Naive thymus-derived CD8-positive, alpha-beta T cell (primary cell): ENCODE measurements at regions of chr5 and their contacts with region 1.

Region 1: DNA sequence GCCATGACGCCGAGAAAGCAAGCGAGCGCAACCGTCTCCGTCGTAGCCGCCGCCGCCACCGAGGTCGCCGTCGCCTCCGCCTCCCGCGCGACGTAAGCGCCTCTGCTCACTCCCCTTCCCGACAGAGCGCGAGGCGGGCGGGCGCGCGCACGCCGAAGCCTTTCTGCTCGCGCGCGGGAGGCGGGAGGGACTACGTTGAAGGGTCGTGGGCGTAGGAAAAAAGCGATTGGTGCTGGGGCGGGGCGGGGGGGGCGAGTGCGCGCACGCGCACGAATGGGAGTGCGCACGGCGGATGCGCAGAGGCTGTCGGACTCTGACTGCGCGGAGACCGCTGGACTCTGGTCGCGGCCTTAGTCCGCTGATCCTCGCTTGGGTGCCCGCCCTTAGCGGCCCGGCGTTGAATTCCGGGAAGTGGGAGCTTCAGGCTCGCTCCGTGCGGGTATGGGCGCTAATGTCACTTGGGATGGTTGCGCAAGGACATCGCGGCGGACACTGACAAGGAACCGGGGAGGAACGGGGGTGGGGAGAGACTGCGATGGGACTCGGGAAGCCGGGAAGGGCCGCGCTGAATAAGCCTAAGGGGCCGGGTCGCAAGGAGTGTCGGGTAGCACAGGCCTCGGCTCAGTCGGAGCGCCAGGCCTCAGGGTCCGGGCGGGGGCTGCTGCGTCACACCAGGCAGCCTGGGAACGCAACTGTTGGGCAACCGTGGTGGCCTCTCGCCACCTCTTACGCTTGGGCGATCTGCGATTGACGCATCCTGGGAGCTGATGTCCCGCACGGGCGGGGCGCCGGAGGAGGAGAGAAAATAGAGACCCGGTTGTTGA is at the start of gene CHD1:
- DNase-seq: peak; percentile 92 to 98 (median 96)
- ATAC-seq: peak; percentile 54 to 59
- H3K4me3 Mint-ChIP-seq: peak within 1 kb of the TSS; percentile 82 to 99 (median 97)
- H3K27ac Mint-ChIP-seq: peak within 1 kb of the TSS; percentile 98 to 100 (median 100)
- H3K4me1 Mint-ChIP-seq: peaks cover 17 to 81% (median 60%) of the 10 kb centered on the region in 4 donors
- H3K27me3 Mint-ChIP-seq: peaks cover 0 to 5% (median 0%) of the 10 kb centered on the region in 5 donors
- polyA plus RNA-seq, gene CHD1: 8.6 to 9.4 (median 9.0) TPM

Region 2: DNA sequence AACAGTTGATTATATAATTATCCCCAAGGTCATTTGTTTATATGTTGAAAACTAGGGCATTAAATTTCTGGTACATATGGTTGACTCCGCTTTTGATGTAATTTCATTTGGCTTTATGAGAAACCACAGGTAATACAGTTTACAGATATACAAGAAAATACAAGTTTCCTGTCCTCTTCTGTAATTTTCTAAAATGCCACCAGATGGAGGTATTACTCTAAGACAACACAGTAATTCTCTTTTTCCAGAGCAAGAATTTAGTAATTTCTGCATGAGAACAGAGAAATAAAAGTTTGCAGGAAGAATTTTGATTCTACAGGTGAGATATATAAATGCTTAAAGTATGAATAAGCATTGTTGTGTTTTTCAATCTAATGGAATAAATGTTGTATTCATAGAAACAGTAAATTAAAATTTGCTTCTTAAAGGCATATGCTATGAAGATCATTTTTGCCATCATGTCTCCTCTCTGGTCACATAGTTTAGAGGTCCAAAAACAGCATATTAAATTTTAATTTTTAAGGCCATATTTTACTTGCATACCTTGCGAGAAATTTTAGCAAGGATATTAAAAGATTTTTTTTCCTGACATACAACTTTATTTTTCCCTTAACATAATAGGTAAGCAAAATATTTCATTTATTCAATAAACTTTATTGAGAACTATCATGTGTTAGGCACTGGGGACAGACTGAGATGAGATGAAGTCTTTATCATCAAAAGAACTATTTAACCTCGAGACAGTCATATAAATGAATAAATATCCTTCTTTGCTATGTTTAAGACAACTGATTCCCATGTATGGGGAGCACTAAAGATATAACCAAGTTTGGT is 23.0 kb before region 1 on chr5:
- POLR2A ChIA-PET with region 1: interaction called, 11 read pairs
- DNase-seq: peak in 3 of 10 donors; percentile 71 to 73 (median 71)
- ATAC-seq: peak; percentile 61 to 65
- H3K4me3 Mint-ChIP-seq: no peak overlapping the region
- H3K27ac Mint-ChIP-seq: peak overlapping the region in 6 of 10 donors; percentile 12 to 73 (median 31)
- H3K4me1 Mint-ChIP-seq: peaks cover 15 to 57% (median 43%) of the 10 kb centered on the region in 4 donors
- H3K27me3 Mint-ChIP-seq: no peaks in the 10 kb centered on the region

Region 3: GRCh38 chr5:98940581-98940980 is 11.5 kb after region 1 on chr5:
- POLR2A ChIA-PET with region 1: interaction called, 36 read pairs
- DNase-seq: no peak
- ATAC-seq: no peak
- H3K4me3 Mint-ChIP-seq: no peak overlapping the region
- H3K27ac Mint-ChIP-seq: peak overlapping the region in 9 of 10 donors; percentile 5 to 85 (median 60)
- H3K4me1 Mint-ChIP-seq: peaks cover 24 to 58% (median 48%) of the 10 kb centered on the region in 4 donors
- H3K27me3 Mint-ChIP-seq: no peaks in the 10 kb centered on the region

Region 4: DNA sequence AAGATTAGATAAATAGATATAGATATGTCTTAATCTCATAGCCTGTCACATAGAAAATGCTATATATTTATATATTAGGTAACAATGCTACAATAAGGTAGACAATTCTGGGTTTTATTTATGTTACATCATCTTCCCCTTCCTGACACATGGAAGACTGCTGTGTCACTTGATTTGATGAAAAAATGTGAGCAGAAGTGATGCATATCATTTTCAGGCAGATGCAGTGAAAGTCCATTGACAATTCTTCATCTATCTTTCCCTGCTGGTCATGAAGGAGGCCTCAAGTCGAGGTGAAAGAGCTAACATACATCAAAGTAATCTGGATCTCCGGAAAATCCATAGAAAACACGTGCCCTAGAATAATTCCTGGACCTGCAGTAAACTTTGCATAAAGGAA is 57.5 kb after region 1 on chr5:
- POLR2A ChIA-PET with region 1: no interaction called
- DNase-seq: no peak
- ATAC-seq: no peak
- H3K4me3 Mint-ChIP-seq: no peak overlapping the region
- H3K27ac Mint-ChIP-seq: no peak overlapping the region
- H3K4me1 Mint-ChIP-seq: peaks cover 5 to 12% (median 8%) of the 10 kb centered on the region in 4 donors
- H3K27me3 Mint-ChIP-seq: no peaks in the 10 kb centered on the region

Region 5: DNA sequence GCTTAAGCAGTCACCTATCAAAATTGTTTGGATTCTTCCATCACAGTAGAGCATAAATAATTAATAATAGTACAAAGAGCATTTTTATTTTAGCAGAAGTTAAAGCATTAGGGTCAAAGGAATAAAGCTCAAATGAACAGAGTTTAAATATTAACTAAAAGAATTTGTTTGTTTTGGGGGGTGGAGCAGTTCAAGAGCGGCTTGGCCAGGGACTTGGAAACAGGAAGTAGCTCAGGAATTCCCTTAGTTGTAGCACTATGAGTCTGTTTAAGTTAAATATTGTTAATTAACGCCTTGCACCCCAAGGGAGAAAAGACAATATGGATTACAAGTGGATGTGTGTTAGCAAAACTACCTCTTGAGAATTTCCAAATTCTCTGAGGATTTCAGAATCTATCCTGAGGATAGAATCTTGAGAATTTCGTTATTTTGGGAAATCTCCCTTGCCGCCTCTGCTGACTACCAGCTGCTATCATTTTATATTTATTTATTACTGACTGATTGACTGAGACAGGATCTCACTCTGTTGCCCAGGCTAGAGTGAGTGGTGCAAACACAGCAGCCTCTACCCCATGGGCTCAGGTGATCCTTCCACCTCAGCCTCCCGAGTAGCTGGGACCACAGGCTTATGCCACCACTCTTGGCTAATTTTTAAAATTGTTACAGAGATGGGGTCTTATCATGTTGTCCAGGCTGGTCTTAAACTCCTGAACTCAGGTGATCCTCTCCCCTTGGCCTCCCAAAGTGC is 96.4 kb after region 1 on chr5:
- POLR2A ChIA-PET with region 1: interaction called, 38 read pairs
- DNase-seq: no peak
- ATAC-seq: no peak
- H3K4me3 Mint-ChIP-seq: no peak overlapping the region
- H3K27ac Mint-ChIP-seq: peak overlapping the region in 1 of 10 donors; percentile 88
- H3K4me1 Mint-ChIP-seq: peaks cover 5 to 44% (median 27%) of the 10 kb centered on the region in 4 donors
- H3K27me3 Mint-ChIP-seq: no peaks in the 10 kb centered on the region

Region 6: GRCh38 chr5:99037668-99038067 is 108.6 kb after region 1 on chr5:
- POLR2A ChIA-PET with region 1: interaction called, 103 read pairs
- DNase-seq: peak; percentile 7 to 84 (median 67)
- ATAC-seq: peak; percentile 77 to 85
- H3K4me3 Mint-ChIP-seq: peak overlapping the region in 9 of 10 donors; percentile 5 to 78 (median 71)
- H3K27ac Mint-ChIP-seq: peak overlapping the region; percentile 74 to 96 (median 89)
- H3K4me1 Mint-ChIP-seq: peaks cover 22 to 74% (median 52%) of the 10 kb centered on the region in 4 donors
- H3K27me3 Mint-ChIP-seq: no peaks in the 10 kb centered on the region